Activated CD4-positive, alpha-beta T cell treated with anti-CD3 and anti-CD28 coated beads, Interleukin-2, amount 10 ng/mL, durations not matched to agents 7 days and 5 days (primary cell): ENCODE measurements at regions of chr11 and their contacts with region 1.

Region 1: GRCh38 chr11:46392421-46393230 is 1.1 kb upstream of the CHRM4 start:
- DNase-seq: peak; percentile 78
- H3K4me3 Mint-ChIP-seq: peak overlapping the region; percentile 59
- H3K27ac Mint-ChIP-seq: no peak overlapping the region
- H3K4me1 Mint-ChIP-seq: peaks cover 21% of the 10 kb centered on the region
- H3K27me3 Mint-ChIP-seq: peaks cover 47% of the 10 kb centered on the region

Region 2: DNA sequence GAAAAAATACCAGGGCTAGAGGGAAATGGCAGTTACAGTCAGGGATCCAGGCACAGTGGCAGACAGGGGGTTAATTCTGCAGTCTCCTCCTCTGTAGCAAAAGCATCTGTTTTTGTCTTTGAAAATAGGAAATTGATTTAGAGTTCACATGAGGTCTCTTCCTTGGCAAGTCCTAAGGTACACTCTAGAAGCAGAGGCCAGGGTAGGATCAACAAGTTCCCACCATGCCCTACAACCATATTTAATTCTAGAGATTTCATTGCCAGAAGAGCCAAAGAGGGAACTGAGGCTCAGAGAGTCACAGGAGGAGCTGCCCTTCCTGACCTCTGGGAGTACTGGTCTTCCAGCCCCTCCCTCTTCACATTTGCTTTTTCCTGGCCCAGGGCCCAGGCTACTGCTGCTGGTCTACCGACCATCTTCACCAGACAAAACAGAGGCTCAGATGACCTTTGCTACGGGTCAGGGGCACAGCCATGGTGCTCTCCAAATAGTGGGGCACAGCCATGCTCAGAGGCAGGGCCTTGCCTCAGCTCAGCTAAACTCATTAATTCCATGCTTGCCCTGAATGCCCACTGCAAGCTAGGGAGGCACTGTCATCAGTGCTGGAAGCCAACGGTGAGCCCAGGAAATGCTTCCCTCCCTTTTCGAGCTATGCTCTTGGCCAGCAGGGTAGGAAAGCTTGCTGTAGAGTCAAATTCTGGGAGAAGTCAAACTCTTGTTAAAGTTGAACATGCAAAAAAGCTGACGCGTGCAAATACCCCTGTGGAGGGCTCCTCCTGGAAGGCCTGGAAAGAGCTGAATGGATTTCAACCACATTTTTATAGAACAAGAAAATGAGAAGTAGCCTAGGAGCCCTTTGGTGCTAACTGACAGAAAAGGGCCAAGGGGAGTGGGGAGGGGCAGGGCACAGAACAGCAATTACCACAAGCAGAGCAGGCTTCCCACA is 10.6 kb after region 1 on chr11:
- CTCF ChIA-PET with region 1: interaction called, 10 read pairs
- POLR2A ChIA-PET with region 1: no interaction called
- DNase-seq: no peak
- H3K4me3 Mint-ChIP-seq: no peak overlapping the region
- H3K27ac Mint-ChIP-seq: no peak overlapping the region
- H3K4me1 Mint-ChIP-seq: no peaks in the 10 kb centered on the region
- H3K27me3 Mint-ChIP-seq: no peaks in the 10 kb centered on the region

Region 3: DNA sequence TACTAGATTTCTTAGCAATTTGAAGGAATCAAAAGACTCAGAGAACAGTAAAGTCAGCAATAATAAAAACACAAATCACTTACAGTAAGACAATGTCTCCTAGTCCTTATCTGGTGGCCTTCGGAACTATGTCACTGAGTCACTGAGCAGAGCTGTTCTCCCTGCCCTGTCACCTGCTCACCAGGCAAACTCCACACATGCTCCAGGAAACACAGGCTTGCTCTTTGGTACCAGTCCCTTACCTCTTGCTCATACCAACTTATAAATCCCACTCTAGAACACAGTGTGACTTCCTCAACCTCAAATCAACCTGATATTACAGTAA is 80.0 kb after region 1 on chr11:
- CTCF ChIA-PET with region 1: no interaction called
- POLR2A ChIA-PET with region 1: no interaction called
- DNase-seq: no peak
- H3K4me3 Mint-ChIP-seq: no peak overlapping the region
- H3K27ac Mint-ChIP-seq: no peak overlapping the region
- H3K4me1 Mint-ChIP-seq: peaks cover 28% of the 10 kb centered on the region
- H3K27me3 Mint-ChIP-seq: no peaks in the 10 kb centered on the region